Activated CD4-positive, alpha-beta T cell treated with anti-CD3 and anti-CD28 coated beads, Interleukin-2, amount 10 ng/mL, durations not matched to agents 24 days and 14 days (primary cell): ENCODE measurements at regions of chr12 and their contacts with region 1.

Region 1: DNA sequence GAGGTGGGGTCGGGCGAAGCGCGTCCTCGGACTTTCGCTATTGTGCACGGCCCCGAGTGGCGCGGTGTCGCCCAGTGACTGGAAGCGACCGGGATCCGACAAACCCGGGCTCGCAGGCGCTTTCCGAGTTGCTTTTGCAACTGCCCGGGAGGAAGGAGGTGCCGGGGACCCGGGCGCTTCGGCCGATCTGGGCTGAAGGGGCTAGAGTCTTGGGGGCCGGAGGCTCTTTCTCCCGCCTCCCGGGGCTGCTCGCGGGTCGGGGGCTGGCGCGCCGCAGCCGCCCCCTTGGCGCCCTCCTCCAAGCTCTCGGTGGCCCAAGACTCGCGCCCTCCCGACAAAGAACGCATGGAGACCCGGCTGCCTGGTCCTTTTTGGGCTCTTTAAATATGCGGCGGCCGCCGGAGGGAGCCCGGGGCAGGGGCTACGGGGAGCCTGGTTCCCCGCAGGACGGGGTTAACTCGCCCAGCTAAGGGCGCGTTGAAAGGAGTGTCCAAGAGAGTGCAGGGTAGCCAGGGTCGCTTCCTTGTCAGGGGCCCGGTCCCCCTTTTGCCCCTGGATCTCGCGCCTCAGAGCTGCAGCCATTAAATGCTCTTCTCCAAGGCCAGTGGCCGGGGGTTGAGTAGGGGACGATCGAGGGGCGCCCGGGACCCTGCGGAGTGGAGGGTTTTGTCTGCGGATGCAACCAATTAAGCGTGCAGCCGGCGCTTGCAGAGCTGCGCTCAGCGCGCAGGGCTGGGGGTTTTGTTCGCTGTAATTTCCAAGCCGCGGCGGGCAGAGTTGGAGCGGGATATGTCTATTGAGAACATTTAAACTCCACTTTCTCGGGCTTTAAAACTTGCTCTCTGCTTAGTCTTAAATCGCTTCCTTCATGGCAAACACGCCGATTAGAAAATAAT is 1.6 kb downstream of the HMGA2 start:
- DNase-seq: peak; percentile 61
- H3K4me3 Mint-ChIP-seq: peak overlapping the region; percentile 26
- H3K27ac Mint-ChIP-seq: no peak overlapping the region
- H3K4me1 Mint-ChIP-seq: peaks cover 7% of the 10 kb centered on the region
- H3K27me3 Mint-ChIP-seq: peaks cover 72% of the 10 kb centered on the region

Region 2: DNA sequence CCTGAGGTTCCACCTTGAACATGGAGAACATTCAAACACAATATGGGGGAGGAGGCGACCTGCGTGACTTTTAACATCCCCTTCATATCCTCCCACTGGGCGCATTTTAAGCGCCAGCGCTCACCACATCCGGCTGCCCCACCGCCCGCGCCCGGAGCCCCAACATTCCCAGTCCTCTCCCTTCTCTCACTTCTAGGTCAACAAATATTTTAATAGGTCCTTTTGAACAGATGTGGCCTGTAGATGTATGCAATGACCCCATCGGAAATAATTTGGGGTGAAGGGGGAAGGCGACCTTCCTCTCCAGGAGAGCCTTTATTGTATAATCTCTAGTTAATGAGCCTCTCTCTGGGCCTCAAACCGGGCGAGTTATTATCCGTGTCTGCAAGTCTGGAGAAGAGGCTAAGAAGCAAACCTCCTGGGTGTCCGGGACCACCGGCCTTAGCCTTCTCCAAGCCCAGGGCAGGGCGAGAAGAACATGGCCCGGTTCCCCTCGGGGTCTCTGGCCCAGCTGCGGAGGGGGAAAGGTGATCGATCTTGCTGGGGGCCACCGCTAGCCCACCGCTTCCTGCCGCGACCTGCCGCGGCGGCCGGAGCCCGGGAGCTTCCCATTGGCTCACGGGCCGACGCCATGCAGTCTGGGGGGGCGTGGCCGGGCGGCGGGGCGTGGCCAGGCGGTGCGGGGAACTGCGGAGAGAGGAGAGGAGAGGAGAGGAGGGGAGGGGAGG is 84.8 kb before region 1 on chr12:
- intact Hi-C with region 1: loop called (anchors 5 kb)
- DNase-seq: peak; percentile 91
- H3K4me3 Mint-ChIP-seq: peak overlapping the region; percentile 78
- H3K27ac Mint-ChIP-seq: no peak overlapping the region
- H3K4me1 Mint-ChIP-seq: peaks cover 9% of the 10 kb centered on the region
- H3K27me3 Mint-ChIP-seq: peaks cover 31% of the 10 kb centered on the region

Region 3: GRCh38 chr12:65891987-65892481 is 66.2 kb after region 1 on chr12:
- intact Hi-C with region 1: no loop called
- DNase-seq: no peak
- H3K4me3 Mint-ChIP-seq: no peak overlapping the region
- H3K27ac Mint-ChIP-seq: no peak overlapping the region
- H3K4me1 Mint-ChIP-seq: no peaks in the 10 kb centered on the region
- H3K27me3 Mint-ChIP-seq: peaks cover 17% of the 10 kb centered on the region